ENCODE measurements at regions of chr6 and their contacts with region 1.

Region 1: DNA sequence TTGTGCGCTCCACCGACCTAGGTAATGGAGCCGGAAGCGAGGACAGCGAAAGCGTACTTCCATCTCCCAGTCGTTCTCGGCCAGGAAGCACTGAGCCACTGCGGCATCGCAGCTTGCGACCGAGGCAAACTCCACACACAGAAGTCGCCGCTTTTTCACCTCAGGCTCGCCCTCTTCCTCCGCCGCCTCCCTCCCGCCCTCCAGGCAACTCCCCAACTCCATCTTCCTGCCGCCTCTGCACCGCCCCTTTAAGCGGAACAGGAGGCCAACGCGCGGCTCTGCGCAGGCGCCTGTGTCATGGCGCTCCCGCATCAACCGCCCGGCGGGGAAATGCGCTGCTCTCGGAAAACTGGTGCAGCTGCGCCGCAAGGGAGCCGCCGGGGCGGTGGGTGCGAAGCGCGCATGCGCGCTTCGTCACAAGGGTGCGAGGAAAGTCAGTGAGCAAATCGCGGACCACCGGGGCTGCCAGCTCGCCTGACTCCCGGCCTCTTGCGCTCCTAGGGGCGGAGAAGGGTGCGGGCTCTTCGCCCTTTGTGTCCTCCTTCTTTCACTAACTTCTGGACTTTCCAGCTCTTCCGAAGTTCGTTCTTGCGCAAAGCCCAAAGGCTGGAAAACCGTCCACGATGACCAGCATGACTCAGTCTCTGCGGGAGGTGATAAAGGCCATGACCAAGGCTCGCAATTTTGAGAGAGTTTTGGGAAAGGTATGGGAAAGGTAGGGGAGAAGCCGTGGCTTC is at the starts of genes ACOT13 and TDP2:
- DNase-seq: peak; percentile 87 to 97
- H3K4me3 ChIP-seq: peak within 1 kb of the TSS; percentile 98
- H3K27ac ChIP-seq: peak within 1 kb of the TSS; percentile 97
- H3K4me1 ChIP-seq: peaks cover 39% of the 10 kb centered on the region
- H3K27me3 ChIP-seq: no peaks in the 10 kb centered on the region
- CTCF ChIP-seq: peak; percentile 55; the same call in 1 of the 2 replicates
- total RNA-seq, gene ACOT13: 70.9 and 79.2 TPM in 2 replicates
- total RNA-seq, gene TDP2: 83.0 and 95.8 TPM in 2 replicates

Region 2: GRCh38 chr6:24743265-24743943 is 76.6 kb after region 1 on chr6:
- CTCF ChIA-PET with region 1: no interaction called
- POLR2A ChIA-PET with region 1: interaction called, 4 read pairs
- intact Hi-C with region 1: loop called (anchors 2 kb)
- DNase-seq: peak; percentile 58 to 90
- H3K4me3 ChIP-seq: peak overlapping the region; percentile 44; the same call in 1 of the 2 replicates
- H3K27ac ChIP-seq: peak overlapping the region; percentile 97
- H3K4me1 ChIP-seq: peaks cover 26% of the 10 kb centered on the region
- H3K27me3 ChIP-seq: no peaks in the 10 kb centered on the region
- CTCF ChIP-seq: no peak

Measured in PC-9 (cell line).